ENCODE measurements at regions of chr2 and their contacts with region 1.

Region 1: DNA sequence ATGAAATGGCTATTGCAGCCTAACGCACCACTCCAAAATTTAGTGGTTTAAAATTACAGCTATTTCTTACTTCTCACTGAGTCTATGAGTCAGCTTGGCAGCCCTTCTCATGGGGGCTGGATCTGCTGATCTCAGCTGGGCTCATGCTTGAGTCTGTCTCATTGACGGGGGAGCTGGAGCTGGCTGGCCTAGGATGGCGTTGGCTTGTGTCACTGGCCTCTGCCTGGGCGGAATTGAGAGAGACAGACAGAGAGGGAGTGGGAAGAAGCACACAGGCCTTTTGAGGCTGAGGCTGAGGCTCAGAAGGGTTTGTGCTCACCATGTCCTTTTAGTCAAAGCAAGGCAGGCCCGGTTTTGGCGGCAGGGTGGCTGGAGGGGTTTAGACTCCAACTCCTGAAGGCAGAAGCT is 412.1 kb upstream of the MYT1L start:
- DNase-seq: peak; percentile 79
- H3K4me3 ChIP-seq: no peak overlapping the region
- H3K27ac ChIP-seq: no peak overlapping the region
- H3K4me1 ChIP-seq: peaks cover 41% of the 10 kb centered on the region
- H3K27me3 ChIP-seq: no peaks in the 10 kb centered on the region
- CTCF ChIP-seq: no peak

Region 2: GRCh38 chr2:2464094-2464493 is 279.1 kb before region 1 on chr2:
- CTCF ChIA-PET with region 1: no interaction called
- dilution Hi-C with region 1: no loop called
- in situ Hi-C with region 1: no loop called
- intact Hi-C with region 1: no loop called
- DNase-seq: no peak
- H3K4me3 ChIP-seq: no peak overlapping the region
- H3K27ac ChIP-seq: no peak overlapping the region
- H3K4me1 ChIP-seq: no peaks in the 10 kb centered on the region
- H3K27me3 ChIP-seq: no peaks in the 10 kb centered on the region
- CTCF ChIP-seq: no peak

Region 3: GRCh38 chr2:2763411-2764355 is 20.5 kb after region 1 on chr2:
- CTCF ChIA-PET with region 1: no interaction called
- dilution Hi-C with region 1: no loop called
- in situ Hi-C with region 1: no loop called
- intact Hi-C with region 1: loop called (anchors 1 kb)
- DNase-seq: peak; percentile 65
- H3K4me3 ChIP-seq: no peak overlapping the region
- H3K27ac ChIP-seq: no peak overlapping the region
- H3K4me1 ChIP-seq: peaks cover 15% of the 10 kb centered on the region
- H3K27me3 ChIP-seq: no peaks in the 10 kb centered on the region
- CTCF ChIP-seq: no peak

Region 4: DNA sequence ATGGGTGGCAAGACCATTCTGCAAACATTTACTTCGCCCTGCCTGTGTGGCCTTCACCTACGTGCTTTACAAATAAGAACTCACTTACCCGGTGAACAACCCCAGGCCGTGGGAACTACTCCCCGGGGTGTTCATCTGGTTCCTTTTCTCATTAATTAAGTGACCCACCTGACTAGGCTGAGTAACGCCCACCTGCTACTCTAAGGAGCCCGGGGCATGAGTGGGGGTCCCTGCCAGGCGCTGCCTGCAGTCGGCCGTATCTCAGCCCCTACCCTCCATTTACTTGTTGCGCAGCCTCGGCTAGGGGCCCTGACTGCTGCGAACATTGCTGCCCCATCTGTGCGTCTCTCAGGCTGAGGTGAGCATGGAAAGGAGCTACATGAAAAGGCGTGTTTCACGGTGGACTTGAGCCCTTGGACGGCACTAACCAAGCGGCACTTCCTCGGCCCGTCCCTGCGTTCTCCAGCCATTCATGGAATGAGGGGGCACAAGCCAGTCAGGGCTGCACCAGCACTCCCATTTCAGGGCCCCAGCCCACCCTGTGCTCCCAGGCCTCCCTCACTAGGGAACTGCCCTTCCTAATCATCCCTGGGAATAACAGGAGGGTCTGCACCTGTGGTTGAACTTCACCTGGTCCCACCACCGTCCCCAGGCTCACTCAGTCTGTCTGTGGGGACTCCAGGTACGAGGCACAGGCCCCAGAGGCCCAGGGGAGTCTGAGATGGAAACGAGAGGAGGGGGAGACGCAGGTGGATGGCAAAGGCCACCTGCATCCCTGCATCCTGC is 534.5 kb after region 1 on chr2:
- CTCF ChIA-PET with region 1: no interaction called
- dilution Hi-C with region 1: no loop called
- in situ Hi-C with region 1: no loop called
- intact Hi-C with region 1: no loop called
- DNase-seq: no peak
- H3K4me3 ChIP-seq: no peak overlapping the region
- H3K27ac ChIP-seq: no peak overlapping the region
- H3K4me1 ChIP-seq: peaks cover 8% of the 10 kb centered on the region
- H3K27me3 ChIP-seq: peaks cover 2% of the 10 kb centered on the region
- CTCF ChIP-seq: no peak